PC-3 (cell line): ENCODE measurements at regions of chr13 and their contacts with region 1.

Region 1: GRCh38 chr13:85970727-85971126 is 171.5 kb upstream of the SLITRK6 start:
- DNase-seq: peak; percentile 36
- ATAC-seq: no peak
- H3K4me3 ChIP-seq: no peak overlapping the region
- H3K27ac ChIP-seq: no peak overlapping the region
- H3K4me1 ChIP-seq: peaks cover 12% of the 10 kb centered on the region
- H3K27me3 ChIP-seq: no peaks in the 10 kb centered on the region
- CTCF ChIP-seq: peak; percentile 46

Region 2: GRCh38 chr13:86085890-86086289 is 115.2 kb after region 1 on chr13:
- CTCF ChIA-PET with region 1: no interaction called
- POLR2A ChIA-PET with region 1: no interaction called
- intact Hi-C with region 1: loop called (anchors 2 kb)
- DNase-seq: peak; percentile 13
- ATAC-seq: no peak
- H3K4me3 ChIP-seq: no peak overlapping the region
- H3K27ac ChIP-seq: no peak overlapping the region
- H3K4me1 ChIP-seq: peaks cover 7% of the 10 kb centered on the region; the same call in 1 of the 2 replicates
- H3K27me3 ChIP-seq: no peaks in the 10 kb centered on the region
- CTCF ChIP-seq: peak; percentile 48; the same call in 1 of the 2 replicates

Region 3: DNA sequence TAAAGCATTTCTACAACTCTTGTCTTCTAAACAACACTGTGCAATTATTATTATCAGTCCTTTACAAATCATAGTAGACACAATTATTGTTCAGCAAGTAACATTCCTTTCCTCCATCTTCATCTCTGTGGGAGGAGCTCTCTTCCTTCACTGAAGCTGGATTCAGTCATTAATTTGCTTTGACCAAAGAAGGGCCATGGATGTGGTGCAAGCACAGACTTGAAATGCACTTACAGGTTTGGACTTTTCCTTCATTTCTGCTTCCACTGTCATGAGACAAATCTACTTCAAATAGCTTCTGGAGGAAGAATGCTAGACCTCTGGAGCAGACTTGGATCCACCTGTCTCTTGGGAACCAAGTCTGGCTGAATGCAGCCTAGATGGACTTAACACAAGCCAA is 165.1 kb after region 1 on chr13:
- CTCF ChIA-PET with region 1: no interaction called
- POLR2A ChIA-PET with region 1: no interaction called
- intact Hi-C with region 1: no loop called
- DNase-seq: no peak
- ATAC-seq: no peak
- H3K4me3 ChIP-seq: no peak overlapping the region
- H3K27ac ChIP-seq: no peak overlapping the region
- H3K4me1 ChIP-seq: no peaks in the 10 kb centered on the region
- H3K27me3 ChIP-seq: no peaks in the 10 kb centered on the region
- CTCF ChIP-seq: no peak

Region 4: GRCh38 chr13:86298725-86299124 is 328.0 kb after region 1 on chr13:
- CTCF ChIA-PET with region 1: no interaction called
- POLR2A ChIA-PET with region 1: no interaction called
- intact Hi-C with region 1: no loop called
- DNase-seq: no peak
- ATAC-seq: no peak
- H3K4me3 ChIP-seq: no peak overlapping the region
- H3K27ac ChIP-seq: no peak overlapping the region
- H3K4me1 ChIP-seq: no peaks in the 10 kb centered on the region
- H3K27me3 ChIP-seq: no peaks in the 10 kb centered on the region
- CTCF ChIP-seq: no peak

Region 5: DNA sequence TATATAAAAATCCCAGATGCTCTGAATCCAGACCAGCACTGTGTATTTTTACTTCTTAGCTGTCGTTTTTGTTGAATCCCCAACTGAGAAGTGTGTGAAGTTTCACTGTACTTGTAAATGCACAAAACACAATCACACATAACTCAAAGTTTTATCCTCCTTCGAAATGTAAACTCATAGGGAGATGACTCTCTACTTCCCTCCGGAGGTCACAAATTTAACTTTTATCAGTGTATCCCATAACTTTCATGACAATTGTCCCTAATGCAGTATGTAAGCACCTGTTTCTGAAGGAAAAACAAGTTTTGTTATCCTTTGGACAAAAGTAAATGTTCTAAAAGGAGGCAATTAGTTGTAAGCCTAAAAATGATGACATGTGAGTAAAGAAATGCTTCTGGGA is 493.5 kb after region 1 on chr13:
- CTCF ChIA-PET with region 1: no interaction called
- POLR2A ChIA-PET with region 1: no interaction called
- intact Hi-C with region 1: loop called (anchors 1 kb)
- DNase-seq: peak; percentile 18
- ATAC-seq: peak; percentile 43; the same call in 1 of the 2 replicates
- H3K4me3 ChIP-seq: no peak overlapping the region
- H3K27ac ChIP-seq: no peak overlapping the region
- H3K4me1 ChIP-seq: no peaks in the 10 kb centered on the region
- H3K27me3 ChIP-seq: no peaks in the 10 kb centered on the region
- CTCF ChIP-seq: no peak; the same call in 1 of the 2 replicates

Region 6: DNA sequence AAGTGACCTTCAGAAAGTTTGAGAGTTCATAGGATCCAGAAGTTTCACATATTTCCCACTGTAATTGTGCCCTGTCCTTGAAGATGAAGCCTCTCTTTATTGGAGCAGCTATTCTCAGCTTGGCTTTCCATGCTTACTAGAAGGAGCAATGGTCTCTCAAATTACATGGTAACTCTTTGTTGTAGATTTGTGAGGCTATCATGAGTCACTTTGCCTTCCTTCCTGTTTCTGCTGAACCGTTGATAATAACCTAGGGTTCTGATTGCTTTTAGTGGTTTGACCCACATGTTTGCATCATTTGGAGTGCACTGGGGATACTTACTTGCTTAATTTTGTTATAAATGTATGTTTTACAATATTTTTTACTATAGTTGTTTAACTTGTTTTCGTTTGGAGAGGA is 601.4 kb after region 1 on chr13:
- CTCF ChIA-PET with region 1: no interaction called
- POLR2A ChIA-PET with region 1: no interaction called
- intact Hi-C with region 1: loop called (anchors 10 kb)
- DNase-seq: peak; percentile 79
- ATAC-seq: peak; percentile 77
- H3K4me3 ChIP-seq: peak overlapping the region; percentile 6; the same call in 1 of the 2 replicates
- H3K27ac ChIP-seq: peak overlapping the region; percentile 95
- H3K4me1 ChIP-seq: peaks cover 38% of the 10 kb centered on the region
- H3K27me3 ChIP-seq: no peaks in the 10 kb centered on the region
- CTCF ChIP-seq: no peak

Region 7: DNA sequence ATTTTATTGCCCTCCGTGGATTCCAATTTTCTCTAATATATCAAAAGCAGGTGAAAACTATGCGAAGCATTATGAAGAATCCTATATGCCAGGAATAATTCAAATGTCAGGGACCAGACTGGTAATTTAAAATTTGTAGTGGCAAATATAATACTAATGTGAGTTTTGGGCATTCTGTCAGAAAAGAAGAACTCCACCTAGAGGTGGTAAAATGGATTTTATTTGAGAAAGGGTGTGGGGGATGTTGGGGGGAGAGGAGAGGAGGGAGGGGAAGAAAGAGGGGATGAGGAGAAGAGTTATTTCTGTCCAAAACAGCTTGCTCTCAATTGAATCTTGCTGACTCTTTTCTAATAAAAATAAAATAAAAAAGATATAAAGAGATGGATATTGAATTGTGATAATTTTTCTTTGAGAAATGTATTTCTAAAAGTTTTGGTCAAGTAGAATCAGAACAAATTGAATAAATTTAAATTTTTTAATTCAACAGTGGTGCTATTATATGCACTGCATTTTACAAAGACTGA is 771.1 kb after region 1 on chr13:
- CTCF ChIA-PET with region 1: no interaction called
- POLR2A ChIA-PET with region 1: no interaction called
- intact Hi-C with region 1: loop called (anchors 5 kb)
- DNase-seq: peak; percentile 24
- ATAC-seq: no peak
- H3K4me3 ChIP-seq: no peak overlapping the region
- H3K27ac ChIP-seq: no peak overlapping the region
- H3K4me1 ChIP-seq: no peaks in the 10 kb centered on the region
- H3K27me3 ChIP-seq: no peaks in the 10 kb centered on the region
- CTCF ChIP-seq: peak; percentile 46